Activated T-helper 1 cell treated with anti-CD3 and anti-CD28 coated beads, Interleukin-12 subunit alpha, Interleukin-12 subunit beta, Interleukin-2, Interleukin-4 antibody, amounts not matched to agents 30 ng/mL and 10 ng/mL and 1 ng/mL, durations not matched to agents 14 hours and 24 hours and 36 hours (primary cell): ENCODE measurements at regions of chr10 and their contacts with region 1.

Region 1: DNA sequence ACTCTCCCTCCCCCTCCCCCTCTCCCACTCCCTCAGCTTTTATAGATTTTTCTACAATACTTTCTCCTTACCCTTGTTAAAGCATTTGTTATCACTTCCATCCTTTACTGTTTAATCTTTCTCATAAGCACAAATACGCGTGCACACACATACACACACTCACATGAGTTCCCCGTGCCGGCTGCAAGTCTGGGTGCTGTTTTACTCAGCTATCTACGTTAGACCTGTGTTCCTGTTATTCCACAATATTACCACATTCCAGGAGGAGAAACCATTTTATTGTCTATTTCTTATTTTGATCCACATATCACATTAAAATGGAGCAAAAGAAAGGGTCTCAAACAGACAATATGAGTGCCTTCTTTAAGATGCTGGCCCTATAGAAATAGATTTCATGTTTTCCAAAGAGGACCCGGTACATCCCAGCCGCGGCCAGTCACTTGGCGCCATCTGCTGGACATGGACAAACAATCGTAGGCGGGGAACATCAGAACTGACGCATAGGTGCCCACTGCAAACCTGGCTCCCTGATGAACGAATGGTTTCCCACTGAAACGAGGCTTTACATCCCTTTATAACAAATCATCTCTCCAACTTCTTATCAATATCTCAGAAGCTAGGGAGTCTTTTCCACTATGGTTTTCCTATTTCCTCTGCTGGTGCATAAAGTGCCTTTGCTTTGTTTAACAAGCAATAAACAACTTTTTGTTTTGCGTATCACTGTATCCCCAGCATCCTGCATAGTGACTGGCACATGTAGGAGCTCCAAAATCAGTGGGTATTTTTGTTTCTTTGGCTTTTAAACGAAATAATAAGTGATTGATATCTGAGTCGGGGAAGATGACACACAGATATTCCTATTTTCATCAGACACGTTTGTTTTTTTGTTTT is 25.2 kb upstream of the OPTN start:
- DNase-seq: peak; percentile 29
- H3K4me3 Mint-ChIP-seq: no peak overlapping the region
- H3K27ac Mint-ChIP-seq: no peak overlapping the region
- H3K4me1 Mint-ChIP-seq: peaks cover 8% of the 10 kb centered on the region
- H3K27me3 Mint-ChIP-seq: peaks cover 24% of the 10 kb centered on the region

Region 2: DNA sequence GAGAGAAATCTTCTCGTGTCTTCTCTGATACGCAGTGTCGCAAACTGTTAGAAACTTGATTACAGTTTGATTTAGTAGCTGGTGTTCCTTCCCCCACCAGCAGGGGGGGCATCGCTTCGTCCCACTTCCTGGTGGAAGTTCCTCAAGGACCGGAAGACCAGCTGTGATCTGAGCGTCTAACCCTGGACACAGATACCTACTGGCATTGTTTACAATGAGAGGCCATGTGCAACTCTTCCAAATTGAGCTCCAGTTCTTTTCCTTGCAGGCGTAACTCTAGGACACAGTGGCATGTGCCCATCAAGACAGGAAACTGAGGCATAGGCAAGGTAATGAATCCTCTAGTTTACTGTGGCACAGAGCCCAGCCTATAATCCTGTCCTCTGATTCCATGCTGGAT is 292.3 kb before region 1 on chr10:
- intact Hi-C with region 1: loop called (anchors 1 kb)
- DNase-seq: no peak
- H3K4me3 Mint-ChIP-seq: no peak overlapping the region
- H3K27ac Mint-ChIP-seq: no peak overlapping the region
- H3K4me1 Mint-ChIP-seq: peaks cover 5% of the 10 kb centered on the region
- H3K27me3 Mint-ChIP-seq: peaks cover 2% of the 10 kb centered on the region

Region 3: GRCh38 chr10:13038391-13038790 is 36.4 kb before region 1 on chr10:
- intact Hi-C with region 1: no loop called
- DNase-seq: no peak
- H3K4me3 Mint-ChIP-seq: no peak overlapping the region
- H3K27ac Mint-ChIP-seq: no peak overlapping the region
- H3K4me1 Mint-ChIP-seq: no peaks in the 10 kb centered on the region
- H3K27me3 Mint-ChIP-seq: no peaks in the 10 kb centered on the region

Region 4: DNA sequence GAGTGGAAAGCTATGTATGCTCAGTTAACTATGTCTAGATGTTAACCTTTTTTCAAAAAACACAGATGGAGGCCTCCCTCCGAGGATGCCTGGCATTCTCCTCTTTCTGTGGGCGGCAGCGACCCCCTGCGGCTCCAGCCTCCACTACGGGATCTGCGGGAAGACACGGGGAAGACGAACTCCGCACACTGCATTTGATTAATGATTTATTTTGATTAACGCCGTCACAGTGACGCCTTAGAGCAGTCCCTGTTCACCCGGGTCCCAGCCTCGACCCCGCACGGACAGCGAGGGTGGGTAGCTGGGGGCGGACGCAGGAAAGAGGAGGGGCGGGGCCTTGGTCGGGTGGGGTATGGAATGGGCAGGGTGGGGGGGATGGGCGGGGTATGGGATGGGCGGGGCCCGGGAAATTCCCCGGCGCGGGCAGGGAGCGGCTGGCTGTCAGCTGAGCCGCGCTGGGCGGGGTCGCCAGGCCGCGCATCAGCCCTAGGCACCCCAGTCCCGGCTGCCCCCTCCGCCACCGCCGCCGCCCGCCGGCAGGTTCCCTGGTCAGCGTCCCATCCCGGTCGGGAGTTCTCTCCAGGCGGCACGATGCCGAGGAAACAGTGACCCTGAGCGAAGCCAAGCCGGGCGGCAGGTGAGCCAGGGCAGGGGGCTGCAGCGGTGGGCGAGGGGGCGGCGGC is 25.0 kb after region 1 on chr10 and contains the start of gene OPTN:
- intact Hi-C with region 1: loop called (anchors 2 kb)
- DNase-seq: peak; percentile 73
- H3K4me3 Mint-ChIP-seq: peak within 1 kb of the TSS; percentile 93
- H3K27ac Mint-ChIP-seq: peak within 1 kb of the TSS; percentile 92
- H3K4me1 Mint-ChIP-seq: peaks cover 55% of the 10 kb centered on the region
- H3K27me3 Mint-ChIP-seq: no peaks in the 10 kb centered on the region
- total RNA-seq, gene OPTN: 52.6 and 54.1 TPM in 2 replicates

Region 5: GRCh38 chr10:13440185-13441061 is 365.6 kb after region 1 on chr10:
- intact Hi-C with region 1: no loop called
- DNase-seq: peak; percentile 43
- H3K4me3 Mint-ChIP-seq: peak overlapping the region; percentile 58
- H3K27ac Mint-ChIP-seq: no peak overlapping the region
- H3K4me1 Mint-ChIP-seq: peaks cover 8% of the 10 kb centered on the region
- H3K27me3 Mint-ChIP-seq: peaks cover 30% of the 10 kb centered on the region